A549 (cell line): ENCODE measurements at regions of chr20 and their contacts with region 1.

Region 1: DNA sequence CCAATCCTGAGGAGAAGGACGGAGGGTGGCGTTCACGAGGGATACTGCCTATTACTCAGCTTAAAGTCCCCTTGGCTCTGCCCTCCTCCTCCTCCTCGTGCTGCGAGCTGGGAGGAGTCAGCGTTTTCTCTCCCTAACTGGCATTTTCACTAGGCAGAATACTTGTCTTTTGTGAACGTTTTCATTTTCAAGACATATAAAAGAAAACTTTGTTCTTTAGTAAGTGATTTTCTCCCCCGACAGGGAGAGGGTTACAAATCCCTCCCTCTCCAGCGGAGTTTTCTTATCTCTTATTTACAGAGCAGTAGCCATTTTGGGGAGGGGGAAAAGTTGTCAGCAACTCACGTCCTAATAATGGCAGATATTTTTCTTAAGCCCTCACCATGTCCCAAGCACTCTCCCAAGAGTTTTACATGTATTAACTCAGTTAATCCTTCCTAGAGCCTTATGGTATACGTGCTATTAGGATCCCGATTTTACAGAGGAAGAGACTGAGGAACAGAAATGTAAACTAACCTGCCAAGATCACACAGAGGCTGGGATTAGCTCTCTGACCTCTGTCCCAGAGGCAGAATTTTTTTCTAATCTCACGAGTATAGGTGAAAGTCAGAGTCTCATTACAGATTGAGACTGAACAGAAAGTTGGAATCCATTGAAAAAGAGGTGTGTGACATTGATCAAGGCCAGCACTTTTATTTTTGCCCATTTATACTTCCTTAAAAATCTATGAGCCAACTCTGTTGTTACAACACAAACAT is 30.0 kb upstream of the ZNF217 start:
- DNase-seq: peak; percentile 71 to 88
- ATAC-seq: peak; percentile 83
- H3K4me3 ChIP-seq: peak overlapping the region; percentile 37
- H3K27ac ChIP-seq: peak overlapping the region; percentile 93 to 98
- H3K4me1 ChIP-seq: peaks cover 38% of the 10 kb centered on the region
- CTCF ChIP-seq: 0 out of 3 replicates have a peak, but pooled peaks have one; percentile 24
- EP300 ChIP-seq: no peak
- POLR2A ChIP-seq: no peak; the same call in 1 of the 2 replicates
- RAD21 ChIP-seq: peak; percentile 38 to 49; a peak in 4 of 5 replicates

Region 2: GRCh38 chr20:52682237-52682636 is 941.4 kb before region 1 on chr20:
- CTCF ChIA-PET with region 1: no interaction called
- POLR2A ChIA-PET with region 1: no interaction called
- DNase-seq: no peak
- ATAC-seq: no peak
- H3K4me3 ChIP-seq: no peak overlapping the region
- H3K27ac ChIP-seq: no peak overlapping the region
- H3K4me1 ChIP-seq: no peaks in the 10 kb centered on the region
- CTCF ChIP-seq: no peak
- EP300 ChIP-seq: no peak
- POLR2A ChIP-seq: no peak
- RAD21 ChIP-seq: no peak

Region 3: DNA sequence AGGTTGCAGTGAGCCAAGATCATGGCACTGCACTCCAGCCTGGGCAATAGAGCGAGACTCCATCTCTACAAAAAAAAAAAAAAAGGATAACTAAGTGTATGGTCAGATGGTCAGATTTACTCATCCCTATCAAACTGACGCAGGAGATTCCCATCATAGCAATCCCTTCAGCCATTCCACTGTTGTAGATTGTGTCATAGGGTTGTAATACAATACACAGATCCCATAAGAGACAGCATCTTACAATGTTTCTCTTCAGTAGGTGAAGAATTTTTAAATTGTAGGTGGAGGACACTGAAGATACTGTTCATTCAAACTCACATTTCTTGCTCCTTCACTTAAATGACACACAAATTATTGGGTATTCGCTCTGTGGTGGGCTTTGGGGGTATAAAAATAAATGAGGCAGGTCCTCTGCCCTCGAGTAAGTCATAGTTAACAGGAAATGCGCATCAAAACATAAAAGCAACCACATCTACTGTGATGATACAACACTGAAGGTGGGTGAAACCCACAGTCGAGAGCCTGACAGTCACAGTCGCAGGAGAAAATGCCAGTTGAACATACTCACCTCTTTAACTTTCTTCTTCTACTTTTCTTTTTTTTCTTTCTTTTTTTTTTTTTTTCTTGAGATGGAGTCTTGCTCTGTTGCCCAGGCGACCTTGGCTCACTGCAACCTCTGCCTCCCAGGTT is 235.5 kb before region 1 on chr20:
- CTCF ChIA-PET with region 1: no interaction called
- POLR2A ChIA-PET with region 1: no interaction called
- DNase-seq: no peak
- ATAC-seq: no peak
- H3K4me3 ChIP-seq: no peak overlapping the region
- H3K27ac ChIP-seq: no peak overlapping the region
- H3K4me1 ChIP-seq: no peaks in the 10 kb centered on the region
- CTCF ChIP-seq: no peak
- EP300 ChIP-seq: no peak
- POLR2A ChIP-seq: no peak
- RAD21 ChIP-seq: no peak

Region 4: DNA sequence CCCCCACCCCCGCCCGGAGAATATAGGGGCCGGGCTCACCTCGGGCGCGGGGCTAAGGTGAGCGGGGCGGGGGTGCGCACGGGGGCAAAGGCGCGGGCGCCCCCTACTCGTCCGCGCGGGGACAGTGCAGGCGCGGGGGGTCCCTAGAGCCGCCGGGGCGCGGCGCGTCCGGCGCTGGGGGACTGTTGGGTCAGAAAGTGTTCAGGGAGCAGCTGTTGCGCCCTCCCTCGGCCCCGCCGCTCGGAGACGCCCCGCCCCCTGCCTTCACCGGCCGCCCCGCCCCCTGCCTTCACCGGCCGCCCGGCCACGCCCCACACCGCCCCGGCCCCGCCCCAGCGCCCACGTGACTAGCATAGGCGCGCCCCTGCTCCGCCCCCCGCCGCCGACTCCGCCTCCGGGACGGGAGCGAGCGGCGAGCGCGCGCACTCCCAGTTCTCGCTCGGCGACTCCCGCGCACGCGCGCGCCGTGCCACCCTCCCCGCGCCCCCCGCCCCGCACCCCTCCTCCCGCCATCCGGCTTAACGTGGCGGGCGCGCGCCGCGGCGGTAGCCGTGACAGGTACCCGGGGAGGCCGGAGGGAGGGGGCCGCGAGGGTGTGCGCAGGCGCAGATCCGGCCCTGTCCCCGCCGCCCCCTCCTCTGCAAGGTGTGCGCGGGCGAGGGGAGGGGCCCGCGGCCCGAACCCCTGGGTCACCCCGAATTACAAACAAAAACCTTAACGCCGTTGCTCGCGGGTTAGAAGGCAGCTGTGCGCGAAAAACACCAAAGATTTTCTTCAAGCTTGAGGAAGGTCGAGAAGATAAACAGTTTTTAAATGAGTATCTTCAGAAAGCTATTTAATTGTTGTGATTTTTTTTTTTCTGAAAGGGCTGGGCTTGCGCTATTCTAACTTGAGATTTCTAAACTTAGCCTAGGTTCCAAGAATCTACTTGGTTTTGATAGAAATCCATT is 29.3 kb before region 1 on chr20:
- CTCF ChIA-PET with region 1: interaction called, 12 read pairs
- POLR2A ChIA-PET with region 1: interaction called, 69 read pairs
- DNase-seq: peak; percentile 48 to 95
- ATAC-seq: peak; percentile 79 to 80
- H3K4me3 ChIP-seq: peak overlapping the region; percentile 94
- H3K27ac ChIP-seq: peak overlapping the region; percentile 99 to 100
- H3K4me1 ChIP-seq: peaks cover 35% of the 10 kb centered on the region
- CTCF ChIP-seq: peak; percentile 45
- EP300 ChIP-seq: peak in 1 of 2 experiments; percentile 9; a peak in 1 of 5 replicates
- POLR2A ChIP-seq: peak; percentile 20; the same call in 1 of the 2 replicates
- RAD21 ChIP-seq: peak; percentile 29 to 68; a peak in 4 of 5 replicates

Region 5: GRCh38 chr20:53643031-53643832 is 19.6 kb after region 1 on chr20:
- CTCF ChIA-PET with region 1: interaction called, 5 read pairs
- POLR2A ChIA-PET with region 1: interaction called, 19 read pairs
- DNase-seq: peak; percentile 82 to 87
- ATAC-seq: peak; percentile 93
- H3K4me3 ChIP-seq: 0 out of 3 replicates have a peak overlapping the region, but pooled peaks have one; percentile 14
- H3K27ac ChIP-seq: peak overlapping the region; percentile 75 to 87
- H3K4me1 ChIP-seq: peaks cover 34% of the 10 kb centered on the region
- CTCF ChIP-seq: no peak
- EP300 ChIP-seq: 0 out of 5 replicates have a peak, but pooled peaks of 1 of the 2 experiments have one; percentile 16
- POLR2A ChIP-seq: no peak
- RAD21 ChIP-seq: peak in 1 of 2 experiments; percentile 15; a peak in 2 of 5 replicates

Region 6: DNA sequence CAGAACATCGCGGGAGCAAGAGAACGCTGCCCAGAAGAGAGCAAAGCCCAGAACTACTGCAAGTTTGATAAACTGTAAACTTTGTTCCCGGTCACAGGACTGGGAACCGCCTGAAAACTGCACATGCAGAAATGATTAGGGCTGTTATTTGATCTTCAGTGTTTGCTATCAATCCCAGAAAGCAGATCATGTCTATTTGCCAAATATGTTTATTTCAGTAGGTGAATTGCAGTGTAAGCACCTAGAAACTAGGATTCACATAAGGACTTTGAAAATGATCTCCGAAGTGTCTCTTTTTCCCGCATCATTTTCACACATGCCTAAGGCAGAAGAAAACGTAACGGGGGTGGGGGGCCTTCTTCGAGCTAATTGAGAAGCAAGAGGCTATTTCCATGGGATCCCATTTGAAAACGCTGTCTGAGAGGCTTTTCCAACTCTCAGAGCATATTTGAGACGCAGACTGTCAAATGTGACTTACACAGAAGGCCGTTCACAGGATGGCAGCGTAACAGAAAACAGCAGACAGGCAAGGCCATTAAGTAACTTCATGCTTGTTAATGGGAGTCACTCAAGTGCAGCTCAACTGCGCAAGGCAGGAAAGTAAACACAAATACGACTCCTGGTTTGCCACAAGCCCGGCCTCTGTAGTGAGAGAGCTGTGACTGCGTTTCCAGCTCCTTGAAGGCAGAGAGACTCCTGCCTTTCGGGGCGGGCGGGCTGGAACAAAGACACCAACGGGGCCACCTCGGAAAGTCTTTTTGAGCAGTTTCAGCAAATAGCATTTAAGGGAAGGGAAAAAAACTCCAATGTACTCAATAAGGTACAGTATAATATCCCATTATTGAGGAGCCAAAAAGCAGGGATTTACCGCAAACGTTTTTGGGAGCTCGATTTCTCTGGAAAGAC is 114.7 kb after region 1 on chr20:
- CTCF ChIA-PET with region 1: interaction called, 4 read pairs
- POLR2A ChIA-PET with region 1: interaction called, 18 read pairs
- DNase-seq: peak; percentile 67 to 95
- ATAC-seq: peak; percentile 90 to 91
- H3K4me3 ChIP-seq: peak overlapping the region; percentile 27; the same call in 2 of the 3 replicates
- H3K27ac ChIP-seq: peak overlapping the region; percentile 89 to 90
- H3K4me1 ChIP-seq: peaks cover 72% of the 10 kb centered on the region
- CTCF ChIP-seq: no peak
- EP300 ChIP-seq: no peak
- POLR2A ChIP-seq: peak; percentile 41
- RAD21 ChIP-seq: peak; percentile 13 to 37; a peak in 3 of 5 replicates

Region 7: DNA sequence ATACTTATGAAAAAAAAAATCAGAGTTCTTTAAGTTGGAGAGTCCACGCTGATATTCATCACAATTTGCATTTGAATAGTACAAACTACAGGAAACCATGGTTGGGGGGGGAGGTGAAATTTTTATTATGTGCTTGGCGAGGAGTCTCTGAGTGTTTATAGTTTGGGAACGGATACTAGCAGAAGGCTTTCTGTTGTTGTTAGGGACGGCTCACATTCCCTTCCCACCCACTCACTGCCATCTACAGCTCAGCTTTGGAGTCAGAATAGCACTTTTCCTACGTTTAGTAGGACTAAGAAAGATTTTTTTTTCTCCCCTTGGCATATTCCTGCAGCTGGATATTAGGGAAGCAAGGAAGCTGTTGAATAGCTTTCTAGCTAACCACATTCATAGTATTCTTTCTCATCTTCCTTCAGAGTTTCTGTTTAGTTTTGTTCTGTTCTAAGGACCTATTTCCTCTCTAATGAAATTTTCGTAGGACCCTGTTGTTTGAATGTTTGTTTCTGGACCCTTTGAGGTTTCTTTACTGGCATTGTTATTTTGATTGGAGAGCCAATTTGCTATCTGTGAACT is 205.1 kb after region 1 on chr20:
- CTCF ChIA-PET with region 1: no interaction called
- POLR2A ChIA-PET with region 1: interaction called, 15 read pairs
- DNase-seq: peak; percentile 60 to 84
- ATAC-seq: peak; percentile 83 to 84
- H3K4me3 ChIP-seq: peak overlapping the region; percentile 28
- H3K27ac ChIP-seq: peak overlapping the region; percentile 93 to 97
- H3K4me1 ChIP-seq: peaks cover 63% of the 10 kb centered on the region
- CTCF ChIP-seq: peak; percentile 35
- EP300 ChIP-seq: no peak
- POLR2A ChIP-seq: no peak
- RAD21 ChIP-seq: peak; percentile 46 to 48; a peak in 3 of 5 replicates